Panc1 (cell line): ENCODE measurements at regions of chr2 and their contacts with region 1.

Region 1: GRCh38 chr2:169426052-169426663 is 53.1 kb upstream of the BBS5 start:
- DNase-seq: no peak
- ATAC-seq: no peak
- H3K4me3 ChIP-seq: no peak overlapping the region
- H3K27ac ChIP-seq: no peak overlapping the region
- H3K4me1 ChIP-seq: no peaks in the 10 kb centered on the region
- H3K27me3 ChIP-seq: peaks cover 21% of the 10 kb centered on the region
- CTCF ChIP-seq: no peak

Region 2: GRCh38 chr2:169933124-169933711 is 507.1 kb after region 1 on chr2:
- CTCF ChIA-PET with region 1: interaction called, 11 read pairs
- POLR2A ChIA-PET with region 1: no interaction called
- in situ Hi-C with region 1: no loop called
- intact Hi-C with region 1: no loop called
- DNase-seq: peak; percentile 4
- ATAC-seq: no peak; the same call in 1 of the 2 replicates
- H3K4me3 ChIP-seq: no peak overlapping the region
- H3K27ac ChIP-seq: no peak overlapping the region
- H3K4me1 ChIP-seq: no peaks in the 10 kb centered on the region
- H3K27me3 ChIP-seq: no peaks in the 10 kb centered on the region
- CTCF ChIP-seq: peak; percentile 78; the same call in 1 of the 2 replicates